ENCODE measurements at regions of chr11 and their contacts with region 1.

Region 1: GRCh38 chr11:108697872-108698473 is 33.1 kb downstream of the DDX10 start:
- DNase-seq: peak; percentile 72 to 73
- H3K4me3 ChIP-seq: no peak overlapping the region
- H3K4me3 Mint-ChIP-seq: no peak overlapping the region
- H3K27ac Mint-ChIP-seq: peak overlapping the region; percentile 21
- H3K4me1 ChIP-seq: peaks cover 18% of the 10 kb centered on the region
- H3K4me1 Mint-ChIP-seq: peaks cover 19% of the 10 kb centered on the region
- H3K27me3 ChIP-seq: no peaks in the 10 kb centered on the region
- H3K27me3 Mint-ChIP-seq: no peaks in the 10 kb centered on the region
- CTCF ChIP-seq: peak; percentile 94 to 100

Region 2: GRCh38 chr11:108734956-108735559 is 37.1 kb after region 1 on chr11:
- CTCF ChIA-PET with region 1: interaction called, 3 read pairs
- POLR2A ChIA-PET with region 1: no interaction called
- intact Hi-C with region 1: loop called (anchors 1 kb)
- DNase-seq: peak in 1 of 2 experiments; percentile 51
- H3K4me3 ChIP-seq: no peak overlapping the region
- H3K4me3 Mint-ChIP-seq: no peak overlapping the region
- H3K27ac Mint-ChIP-seq: no peak overlapping the region
- H3K4me1 ChIP-seq: peaks cover 28% of the 10 kb centered on the region
- H3K4me1 Mint-ChIP-seq: peaks cover 26% of the 10 kb centered on the region
- H3K27me3 ChIP-seq: no peaks in the 10 kb centered on the region
- H3K27me3 Mint-ChIP-seq: no peaks in the 10 kb centered on the region
- CTCF ChIP-seq: peak; percentile 63 to 69

Region 3: GRCh38 chr11:108871152-108871551 is 173.2 kb after region 1 on chr11:
- CTCF ChIA-PET with region 1: interaction called, 33 read pairs
- POLR2A ChIA-PET with region 1: no interaction called
- intact Hi-C with region 1: loop called (anchors 1 kb)
- DNase-seq: peak; percentile 55 to 64
- H3K4me3 ChIP-seq: no peak overlapping the region
- H3K4me3 Mint-ChIP-seq: no peak overlapping the region
- H3K27ac Mint-ChIP-seq: no peak overlapping the region
- H3K4me1 ChIP-seq: no peaks in the 10 kb centered on the region
- H3K4me1 Mint-ChIP-seq: no peaks in the 10 kb centered on the region
- H3K27me3 ChIP-seq: no peaks in the 10 kb centered on the region
- H3K27me3 Mint-ChIP-seq: no peaks in the 10 kb centered on the region
- CTCF ChIP-seq: peak; percentile 73 to 91

Region 4: DNA sequence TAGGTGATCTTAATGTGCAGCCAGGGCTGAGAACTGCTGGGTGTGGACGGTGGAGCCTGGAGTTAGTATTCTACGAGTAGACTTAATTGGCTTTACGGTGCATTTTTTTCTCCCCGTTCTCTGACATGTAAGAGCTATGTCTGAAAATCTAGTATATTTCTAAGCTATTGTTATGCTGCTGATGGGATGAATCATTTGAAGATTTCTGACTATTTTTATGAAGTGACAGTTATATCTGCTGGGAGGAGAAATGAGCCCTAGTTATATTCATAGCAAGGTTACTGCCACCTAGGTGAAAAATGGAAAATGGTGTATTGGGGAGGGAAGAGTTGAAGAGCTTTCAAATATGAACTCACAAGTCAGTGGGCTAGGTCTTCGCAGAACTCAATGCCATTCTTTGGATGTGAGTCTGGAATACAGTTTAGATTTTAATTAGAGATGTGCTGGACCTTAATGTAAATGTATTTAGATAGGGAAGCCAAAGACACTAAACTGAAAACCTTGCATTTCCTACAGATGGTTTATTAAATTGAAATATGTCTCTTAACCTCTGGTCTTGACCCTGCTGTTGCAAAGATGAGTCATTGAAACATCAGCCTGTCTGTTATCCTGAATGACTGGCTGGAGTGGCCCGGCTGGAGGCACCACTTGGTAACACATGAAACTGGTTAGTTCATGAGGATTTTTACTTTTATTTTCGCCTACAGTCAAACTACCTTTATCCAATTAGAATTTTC is 260.6 kb after region 1 on chr11:
- CTCF ChIA-PET with region 1: no interaction called
- POLR2A ChIA-PET with region 1: no interaction called
- intact Hi-C with region 1: loop called (anchors 5 kb)
- DNase-seq: no peak
- H3K4me3 ChIP-seq: no peak overlapping the region
- H3K4me3 Mint-ChIP-seq: no peak overlapping the region
- H3K27ac Mint-ChIP-seq: no peak overlapping the region
- H3K4me1 ChIP-seq: no peaks in the 10 kb centered on the region
- H3K4me1 Mint-ChIP-seq: no peaks in the 10 kb centered on the region
- H3K27me3 ChIP-seq: no peaks in the 10 kb centered on the region
- H3K27me3 Mint-ChIP-seq: no peaks in the 10 kb centered on the region
- CTCF ChIP-seq: no peak

Region 5: DNA sequence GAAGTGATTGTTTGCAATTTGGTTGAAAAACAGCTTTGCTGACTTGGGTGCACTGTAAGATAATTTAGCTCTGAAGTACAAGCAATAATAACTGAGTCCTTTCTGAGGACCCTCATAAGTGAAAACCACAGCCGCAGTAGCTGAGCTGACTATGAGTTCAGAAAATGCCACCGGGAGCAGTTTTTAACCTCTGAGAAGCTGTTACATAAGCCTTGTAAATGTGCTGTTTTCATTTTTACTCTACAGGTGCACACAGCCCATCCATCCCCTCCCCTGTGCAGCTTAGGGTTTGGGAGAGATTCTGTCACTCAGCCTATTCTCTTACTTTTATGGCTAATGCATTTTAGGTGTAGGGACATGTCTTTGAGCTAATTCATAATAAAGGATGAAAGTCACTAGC is 468.5 kb after region 1 on chr11:
- CTCF ChIA-PET with region 1: no interaction called
- POLR2A ChIA-PET with region 1: no interaction called
- intact Hi-C with region 1: no loop called
- DNase-seq: no peak
- H3K4me3 ChIP-seq: no peak overlapping the region
- H3K4me3 Mint-ChIP-seq: no peak overlapping the region
- H3K27ac Mint-ChIP-seq: no peak overlapping the region
- H3K4me1 ChIP-seq: peaks cover 14% of the 10 kb centered on the region
- H3K4me1 Mint-ChIP-seq: peaks cover 9% of the 10 kb centered on the region
- H3K27me3 ChIP-seq: no peaks in the 10 kb centered on the region
- H3K27me3 Mint-ChIP-seq: peaks cover 11% of the 10 kb centered on the region
- CTCF ChIP-seq: no peak

Region 6: DNA sequence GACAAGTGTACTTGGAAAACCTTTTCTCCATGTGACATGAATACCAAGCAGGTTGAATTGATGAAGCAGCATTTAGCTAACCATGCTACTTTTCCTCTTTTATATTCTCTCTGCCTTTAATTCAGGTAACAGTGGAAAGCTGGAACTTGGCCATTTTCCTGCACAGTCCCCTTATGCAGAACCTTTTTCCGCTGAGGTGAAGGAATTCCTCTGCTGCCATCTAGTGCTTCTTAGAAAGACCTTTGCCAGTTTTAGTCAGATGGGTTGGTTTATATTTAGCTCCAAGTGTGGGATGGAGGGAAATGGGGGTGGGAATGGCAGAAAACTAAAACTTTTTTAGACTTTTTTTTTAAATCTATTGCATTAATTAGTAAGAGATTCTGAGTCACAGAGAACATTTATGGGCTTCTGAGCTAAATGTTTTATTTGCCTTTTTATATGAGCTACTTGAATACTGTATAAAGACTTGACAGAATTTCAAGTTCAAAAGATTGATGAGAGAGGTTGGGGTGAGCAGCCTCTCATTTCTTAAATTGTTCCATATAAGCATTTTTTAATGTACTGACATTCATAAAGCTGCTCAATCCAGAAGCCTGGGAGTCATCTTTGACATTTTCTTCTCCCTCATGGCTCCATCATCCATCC is 1241.3 kb after region 1 on chr11:
- CTCF ChIA-PET with region 1: interaction called, 3 read pairs
- POLR2A ChIA-PET with region 1: no interaction called
- intact Hi-C with region 1: loop called (anchors 5 kb)
- DNase-seq: peak; percentile 59 to 64
- H3K4me3 ChIP-seq: no peak overlapping the region
- H3K4me3 Mint-ChIP-seq: no peak overlapping the region
- H3K27ac Mint-ChIP-seq: no peak overlapping the region
- H3K4me1 ChIP-seq: no peaks in the 10 kb centered on the region
- H3K4me1 Mint-ChIP-seq: no peaks in the 10 kb centered on the region
- H3K27me3 ChIP-seq: no peaks in the 10 kb centered on the region; the same call in 1 of the 2 replicates
- H3K27me3 Mint-ChIP-seq: peaks cover 22% of the 10 kb centered on the region
- CTCF ChIP-seq: peak; percentile 78 to 89